PC-9 (cell line): ENCODE measurements at regions of chr1 and their contacts with region 1.

Region 1: DNA sequence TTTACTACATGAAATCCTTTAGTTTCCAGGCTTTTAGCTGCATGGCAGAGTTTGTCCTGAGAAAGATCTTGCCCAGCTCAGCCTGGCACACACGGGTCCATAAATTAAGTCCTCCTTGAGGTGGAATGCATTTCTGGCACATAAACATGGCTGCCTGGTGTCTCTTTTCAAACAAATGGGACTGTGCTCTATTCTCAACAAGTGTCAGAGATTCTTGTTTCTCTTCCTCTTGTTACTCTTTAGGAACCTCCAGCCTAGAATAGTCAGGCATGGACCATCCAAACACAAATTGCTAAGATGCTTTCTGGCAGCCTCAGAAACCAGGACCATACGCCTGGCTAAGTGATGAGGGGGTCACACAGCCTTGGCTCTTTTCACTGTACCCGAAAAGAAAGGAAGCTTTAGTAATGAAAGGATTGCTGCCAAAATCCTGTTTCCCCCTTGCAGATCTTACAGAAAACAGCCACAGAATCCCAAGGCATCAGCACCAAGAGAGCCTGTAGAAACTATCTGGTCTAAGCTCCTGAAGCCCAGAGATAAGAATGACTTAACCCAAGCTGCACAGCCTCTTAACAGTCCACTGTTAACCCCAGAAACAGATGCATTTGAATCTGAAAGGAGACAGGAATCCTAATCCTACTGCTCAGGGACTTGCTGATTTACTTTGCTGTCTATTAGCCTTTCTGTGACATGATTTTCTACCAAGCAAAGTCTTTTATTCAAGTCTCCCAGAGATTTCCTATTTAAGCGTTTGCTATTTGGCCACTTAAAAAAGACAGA is 31.9 kb upstream of the NRDC start:
- DNase-seq: no peak
- H3K4me3 ChIP-seq: no peak overlapping the region
- H3K27ac ChIP-seq: no peak overlapping the region
- H3K4me1 ChIP-seq: no peaks in the 10 kb centered on the region
- H3K27me3 ChIP-seq: no peaks in the 10 kb centered on the region
- CTCF ChIP-seq: no peak

Region 2: GRCh38 chr1:50474859-50475809 is 1435.3 kb before region 1 on chr1:
- CTCF ChIA-PET with region 1: no interaction called
- POLR2A ChIA-PET with region 1: interaction called, 11 read pairs
- intact Hi-C with region 1: no loop called
- DNase-seq: peak in 1 of 2 experiments; percentile 82
- H3K4me3 ChIP-seq: no peak overlapping the region
- H3K27ac ChIP-seq: peak overlapping the region; percentile 34
- H3K4me1 ChIP-seq: peaks cover 24% of the 10 kb centered on the region
- H3K27me3 ChIP-seq: no peaks in the 10 kb centered on the region
- CTCF ChIP-seq: no peak